ENCODE measurements at regions of chr2 and their contacts with region 1.

Region 1: DNA sequence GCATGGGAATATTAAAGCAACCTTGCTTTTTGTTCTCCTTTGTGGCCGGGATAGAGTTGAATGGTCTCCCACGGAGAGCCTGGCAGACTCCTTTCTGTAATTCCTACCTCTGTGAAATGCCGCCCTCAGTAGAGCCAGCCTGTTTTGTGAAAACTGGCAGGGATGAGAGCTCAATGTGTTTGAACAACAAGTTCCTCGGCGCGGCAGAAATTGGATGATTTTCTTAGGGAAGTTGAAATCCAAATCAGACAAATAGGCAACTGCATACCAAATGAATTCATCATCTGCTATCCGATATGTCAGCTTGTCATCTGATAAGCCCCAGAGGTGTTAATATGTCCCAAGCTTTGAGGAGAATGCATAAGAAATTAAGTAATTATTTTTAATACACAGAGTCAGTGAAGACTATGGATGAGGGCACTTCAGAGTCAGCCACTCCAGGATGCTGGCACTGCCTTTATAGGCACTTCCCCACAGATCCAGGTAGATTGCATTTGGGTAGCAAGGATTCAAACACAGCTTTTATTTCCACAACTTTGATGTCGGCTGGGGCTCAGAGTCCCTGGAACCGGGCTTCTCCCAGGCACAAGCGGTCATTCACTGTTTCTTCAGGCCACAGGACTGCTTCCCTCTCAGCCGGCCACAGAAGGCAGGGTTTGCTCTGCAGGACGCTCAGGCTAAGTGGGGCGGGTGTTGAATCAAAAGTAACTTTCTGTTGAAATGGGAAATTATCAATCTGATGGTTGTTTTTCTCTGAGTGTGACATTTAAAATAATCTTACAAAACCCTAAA is 82.8 kb upstream of the REV1 start:
- DNase-seq: peak; percentile 19
- H3K4me3 ChIP-seq: no peak overlapping the region
- H3K27ac ChIP-seq: no peak overlapping the region
- H3K4me1 ChIP-seq: peaks cover 12% of the 10 kb centered on the region
- H3K27me3 ChIP-seq: no peaks in the 10 kb centered on the region
- CTCF ChIP-seq: no peak
- POLR2A ChIP-seq: no peak

Region 2: GRCh38 chr2:99648178-99648844 is 75.7 kb after region 1 on chr2:
- intact Hi-C with region 1: loop called (anchors 5 kb)
- DNase-seq: no peak
- H3K4me3 ChIP-seq: no peak overlapping the region
- H3K27ac ChIP-seq: no peak overlapping the region
- H3K4me1 ChIP-seq: peaks cover 3% of the 10 kb centered on the region
- H3K27me3 ChIP-seq: no peaks in the 10 kb centered on the region
- CTCF ChIP-seq: no peak
- POLR2A ChIP-seq: no peak

Region 3: GRCh38 chr2:99707592-99707991 is 135.0 kb after region 1 on chr2:
- intact Hi-C with region 1: loop called (anchors 10 kb)
- DNase-seq: no peak
- H3K4me3 ChIP-seq: no peak overlapping the region
- H3K27ac ChIP-seq: no peak overlapping the region
- H3K4me1 ChIP-seq: peaks cover 3% of the 10 kb centered on the region
- H3K27me3 ChIP-seq: no peaks in the 10 kb centered on the region
- CTCF ChIP-seq: no peak
- POLR2A ChIP-seq: no peak

Region 4: DNA sequence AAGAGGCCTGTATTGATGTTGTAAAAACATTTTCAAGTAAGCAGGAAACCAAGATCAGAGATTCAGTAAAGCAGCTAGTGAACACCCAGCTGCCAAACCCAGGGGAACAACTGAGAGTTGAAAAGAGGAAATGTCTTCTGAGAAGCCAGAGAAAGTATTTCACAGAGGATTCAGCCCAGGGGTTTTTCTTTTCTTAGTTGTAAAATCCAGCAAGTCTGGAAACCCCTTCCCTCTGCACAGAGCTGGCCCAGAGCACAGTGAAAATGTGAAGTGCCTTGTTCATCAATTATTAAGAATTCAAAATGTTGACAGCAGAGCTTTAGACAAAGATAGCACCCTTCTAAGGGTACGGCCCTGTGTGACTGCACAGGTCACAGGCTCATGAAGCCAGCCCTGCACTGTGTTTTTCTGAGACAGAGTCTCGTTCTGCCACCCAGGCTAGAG is 541.4 kb after region 1 on chr2:
- intact Hi-C with region 1: loop called (anchors 10 kb)
- DNase-seq: no peak
- H3K4me3 ChIP-seq: no peak overlapping the region
- H3K27ac ChIP-seq: no peak overlapping the region
- H3K4me1 ChIP-seq: no peaks in the 10 kb centered on the region
- H3K27me3 ChIP-seq: no peaks in the 10 kb centered on the region
- CTCF ChIP-seq: no peak
- POLR2A ChIP-seq: no peak

Region 5: DNA sequence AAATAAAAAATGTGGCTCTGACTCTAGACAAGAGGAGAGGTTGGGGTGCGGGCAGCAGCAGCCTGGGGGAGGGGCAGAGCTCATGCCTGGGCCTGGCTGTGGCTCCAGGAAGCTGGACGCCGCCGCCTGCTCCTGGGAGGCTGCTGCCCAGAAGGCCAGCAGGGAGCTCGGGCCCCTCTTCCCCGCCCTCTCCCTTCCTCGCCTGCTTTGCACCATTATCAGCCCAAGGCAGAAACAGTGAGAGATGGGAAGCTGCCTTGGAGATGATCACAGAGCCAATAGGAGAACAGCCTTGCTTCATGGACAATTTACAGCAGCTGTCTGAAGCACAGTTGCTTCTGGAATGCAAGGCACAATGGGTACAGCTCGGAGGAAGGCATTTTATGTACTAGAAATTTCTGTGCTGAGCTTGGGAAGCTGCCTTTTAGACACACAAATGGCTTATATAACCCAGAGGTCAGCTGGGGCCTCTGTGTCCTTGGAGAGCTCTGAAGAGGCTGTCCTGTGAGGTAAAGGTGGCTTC is 625.1 kb after region 1 on chr2:
- intact Hi-C with region 1: loop called (anchors 5 kb)
- DNase-seq: peak; percentile 72
- H3K4me3 ChIP-seq: no peak overlapping the region
- H3K27ac ChIP-seq: peak overlapping the region; percentile 76 to 83
- H3K4me1 ChIP-seq: peaks cover 15% of the 10 kb centered on the region
- H3K27me3 ChIP-seq: no peaks in the 10 kb centered on the region
- CTCF ChIP-seq: no peak
- POLR2A ChIP-seq: no peak